WTC11 (cell line): ENCODE measurements at regions of chr1 and their contacts with region 1.

Region 1: DNA sequence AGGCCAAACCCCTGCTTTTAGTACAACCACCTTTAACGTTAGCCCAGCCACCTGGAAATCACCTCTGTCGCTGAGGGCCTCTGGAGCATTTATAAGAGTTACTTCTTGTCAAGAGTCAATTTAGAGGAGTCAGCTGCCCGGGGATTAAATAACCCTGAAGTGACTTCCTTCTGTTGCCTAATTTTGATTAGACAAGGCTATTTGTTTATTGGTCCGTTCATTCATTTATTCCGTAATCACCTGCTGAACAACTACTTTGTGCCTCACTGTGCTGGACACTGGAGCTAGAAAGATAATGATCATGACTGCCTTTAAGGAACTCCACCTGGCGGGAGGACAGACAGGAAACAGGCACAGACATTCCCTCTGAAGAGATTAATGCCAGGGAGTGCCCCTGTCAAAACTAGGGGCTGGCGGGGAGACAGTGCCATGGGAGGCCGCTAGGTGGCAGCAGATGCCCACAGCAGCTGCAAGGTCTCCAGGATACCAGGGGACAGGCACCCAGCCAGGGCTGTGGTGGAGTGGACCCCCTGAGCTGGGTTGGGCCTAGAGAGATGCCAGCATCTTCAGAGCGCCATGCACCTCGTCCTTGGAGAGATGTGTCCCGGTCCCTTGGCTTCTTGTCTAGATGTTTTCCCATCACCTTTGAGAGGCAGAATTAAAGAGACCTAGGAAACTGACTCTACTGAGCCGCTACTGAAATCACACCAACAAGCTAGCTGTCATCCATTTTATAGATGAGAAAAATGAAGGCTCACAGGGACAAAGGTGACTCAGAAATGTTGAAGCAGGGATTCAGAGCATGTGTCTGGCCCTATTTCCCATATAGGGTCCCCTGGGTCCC is 3.7 kb downstream of the REN start:
- DNase-seq: peak; percentile 94
- ATAC-seq: peak; percentile 98
- H3K4me3 Mint-ChIP-seq: no peak overlapping the region
- H3K27ac Mint-ChIP-seq: no peak overlapping the region
- H3K4me1 Mint-ChIP-seq: peaks cover 2% of the 10 kb centered on the region; the same call in 1 of the 2 replicates
- H3K27me3 Mint-ChIP-seq: peaks cover 8% of the 10 kb centered on the region
- CTCF ChIP-seq: peak; percentile 99

Region 2: DNA sequence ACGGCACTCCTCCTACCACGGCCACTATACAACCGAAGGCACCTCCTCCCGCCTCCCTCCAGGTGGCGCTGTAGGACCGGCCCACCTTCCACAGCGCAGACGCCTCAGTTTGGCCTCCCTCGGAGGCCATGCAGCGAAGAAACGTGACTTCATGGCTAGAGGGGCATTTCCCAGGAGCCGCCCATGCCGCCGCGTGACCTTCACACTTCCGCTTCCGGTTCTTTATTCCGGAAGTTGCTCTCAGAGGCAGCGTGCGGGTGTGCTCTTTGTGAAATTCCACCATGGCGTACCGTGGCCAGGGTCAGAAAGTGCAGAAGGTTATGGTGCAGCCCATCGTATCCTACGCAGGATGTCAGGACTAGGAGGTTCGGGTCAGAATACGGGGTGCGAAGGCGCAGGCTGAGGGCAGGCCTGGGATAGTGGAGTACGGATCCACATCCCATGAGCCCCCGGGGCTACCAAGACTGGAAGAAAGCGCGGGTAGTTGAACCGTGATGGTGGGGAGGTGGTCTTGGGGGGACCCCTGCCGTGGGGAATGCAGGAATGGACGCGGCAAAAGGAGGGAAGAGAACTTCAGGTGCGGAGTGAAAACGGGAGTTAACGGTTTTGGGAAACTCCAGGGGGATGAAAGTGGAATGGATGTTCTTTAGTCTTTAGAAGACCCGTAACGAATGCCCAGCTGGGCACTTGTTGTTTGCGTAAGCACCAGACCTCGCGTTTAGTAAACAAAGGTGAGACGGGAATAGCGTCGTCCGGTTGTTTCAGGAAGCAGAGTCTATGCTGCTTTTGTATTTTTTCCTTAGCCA is 300.9 kb before region 1 on chr1 and contains the start of gene SNRPE:
- CTCF ChIA-PET with region 1: interaction called, 21 read pairs
- POLR2A ChIA-PET with region 1: no interaction called
- DNase-seq: peak; percentile 96
- ATAC-seq: peak; percentile 95
- H3K4me3 Mint-ChIP-seq: peak within 1 kb of the TSS; percentile 94
- H3K27ac Mint-ChIP-seq: peak within 1 kb of the TSS; percentile 98
- H3K4me1 Mint-ChIP-seq: peaks cover 11% of the 10 kb centered on the region
- H3K27me3 Mint-ChIP-seq: peaks cover 3% of the 10 kb centered on the region
- CTCF ChIP-seq: peak; percentile 87
- total RNA-seq, gene SNRPE: 245 to 260 TPM (median 250 TPM) in 3 replicates

Region 3: GRCh38 chr1:204151552-204152309 is 10.7 kb before region 1 on chr1 and contains the start of gene ETNK2:
- CTCF ChIA-PET with region 1: interaction called, 29 read pairs
- POLR2A ChIA-PET with region 1: interaction called, 3 read pairs
- DNase-seq: peak; percentile 66
- ATAC-seq: peak; percentile 29
- H3K4me3 Mint-ChIP-seq: peak within 1 kb of the TSS; percentile 73
- H3K27ac Mint-ChIP-seq: no peak within 1 kb of the TSS
- H3K4me1 Mint-ChIP-seq: peaks cover 39% of the 10 kb centered on the region
- H3K27me3 Mint-ChIP-seq: peaks cover 29% of the 10 kb centered on the region
- CTCF ChIP-seq: no peak
- total RNA-seq, gene ETNK2: 18.3 to 20.2 TPM (median 19.7 TPM) in 3 replicates

Region 4: DNA sequence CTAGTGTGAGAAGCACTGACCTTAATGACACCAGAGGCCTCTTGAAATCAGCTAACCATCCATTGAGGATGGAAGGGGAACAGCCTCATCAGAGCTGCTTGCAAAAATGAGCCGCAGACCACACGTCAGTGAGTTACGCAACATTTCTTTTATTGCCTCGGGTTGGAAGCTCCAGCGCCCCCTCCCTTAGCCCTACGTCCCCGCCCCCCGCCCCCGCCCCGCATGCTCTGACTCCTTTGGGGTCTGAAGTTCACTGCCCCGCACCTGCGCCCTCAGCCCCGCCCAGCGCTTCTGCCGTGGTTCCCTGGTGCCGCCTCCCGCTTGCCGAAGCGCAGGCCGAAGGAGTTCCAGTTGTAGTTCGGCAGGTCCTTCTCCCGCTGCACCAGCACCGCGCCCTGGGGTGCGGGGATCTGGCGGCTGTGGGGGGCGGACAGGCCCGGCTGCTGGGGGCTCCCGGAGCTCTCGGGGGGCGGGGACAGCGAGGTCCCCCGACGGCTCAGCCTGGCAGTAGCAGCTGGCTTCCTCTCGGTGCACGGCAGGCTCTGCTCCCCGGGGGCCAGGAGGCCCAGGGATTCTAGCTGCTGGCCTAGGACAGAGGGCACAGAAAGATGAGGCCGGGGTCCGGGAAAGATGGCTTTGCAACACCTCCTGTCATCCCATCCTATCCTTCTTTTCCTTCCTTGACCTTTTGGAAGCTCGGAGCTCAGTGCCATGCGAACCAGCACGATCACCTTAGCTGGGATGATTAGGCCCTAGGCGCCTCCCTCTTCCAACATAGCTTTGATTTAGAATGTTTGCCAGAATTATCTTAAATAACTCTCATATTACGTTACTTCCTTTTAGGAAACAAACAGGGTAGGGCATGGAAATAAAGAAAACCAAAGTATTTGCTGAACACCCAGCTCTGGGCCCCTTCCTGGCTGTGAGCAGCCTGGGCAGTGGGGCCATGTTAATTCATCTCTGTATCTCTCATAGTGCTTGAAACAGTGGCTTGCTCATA is 28.1 kb after region 1 on chr1:
- CTCF ChIA-PET with region 1: interaction called, 59 read pairs
- POLR2A ChIA-PET with region 1: no interaction called
- DNase-seq: peak; percentile 75
- ATAC-seq: peak; percentile 78
- H3K4me3 Mint-ChIP-seq: peak overlapping the region; percentile 61
- H3K27ac Mint-ChIP-seq: no peak overlapping the region
- H3K4me1 Mint-ChIP-seq: peaks cover 8% of the 10 kb centered on the region
- H3K27me3 Mint-ChIP-seq: peaks cover 66% of the 10 kb centered on the region
- CTCF ChIP-seq: no peak

Region 5: GRCh38 chr1:204257954-204258752 is 95.7 kb after region 1 on chr1:
- CTCF ChIA-PET with region 1: interaction called, 22 read pairs
- POLR2A ChIA-PET with region 1: no interaction called
- DNase-seq: peak; percentile 86
- ATAC-seq: peak; percentile 71
- H3K4me3 Mint-ChIP-seq: no peak overlapping the region
- H3K27ac Mint-ChIP-seq: no peak overlapping the region
- H3K4me1 Mint-ChIP-seq: peaks cover 36% of the 10 kb centered on the region
- H3K27me3 Mint-ChIP-seq: no peaks in the 10 kb centered on the region
- CTCF ChIP-seq: peak; percentile 57

Region 6: GRCh38 chr1:204377795-204378608 is 215.5 kb after region 1 on chr1:
- CTCF ChIA-PET with region 1: interaction called, 12 read pairs
- POLR2A ChIA-PET with region 1: no interaction called
- DNase-seq: peak; percentile 72
- ATAC-seq: peak; percentile 85
- H3K4me3 Mint-ChIP-seq: peak overlapping the region; percentile 85
- H3K27ac Mint-ChIP-seq: peak overlapping the region; percentile 82; the same call in 1 of the 2 replicates
- H3K4me1 Mint-ChIP-seq: peaks cover 9% of the 10 kb centered on the region
- H3K27me3 Mint-ChIP-seq: peaks cover 36% of the 10 kb centered on the region
- CTCF ChIP-seq: no peak